Upper lobe of right lung (tissue), 1 donor: ENCODE measurements at regions of chr15 and their contacts with region 1.

Region 1: DNA sequence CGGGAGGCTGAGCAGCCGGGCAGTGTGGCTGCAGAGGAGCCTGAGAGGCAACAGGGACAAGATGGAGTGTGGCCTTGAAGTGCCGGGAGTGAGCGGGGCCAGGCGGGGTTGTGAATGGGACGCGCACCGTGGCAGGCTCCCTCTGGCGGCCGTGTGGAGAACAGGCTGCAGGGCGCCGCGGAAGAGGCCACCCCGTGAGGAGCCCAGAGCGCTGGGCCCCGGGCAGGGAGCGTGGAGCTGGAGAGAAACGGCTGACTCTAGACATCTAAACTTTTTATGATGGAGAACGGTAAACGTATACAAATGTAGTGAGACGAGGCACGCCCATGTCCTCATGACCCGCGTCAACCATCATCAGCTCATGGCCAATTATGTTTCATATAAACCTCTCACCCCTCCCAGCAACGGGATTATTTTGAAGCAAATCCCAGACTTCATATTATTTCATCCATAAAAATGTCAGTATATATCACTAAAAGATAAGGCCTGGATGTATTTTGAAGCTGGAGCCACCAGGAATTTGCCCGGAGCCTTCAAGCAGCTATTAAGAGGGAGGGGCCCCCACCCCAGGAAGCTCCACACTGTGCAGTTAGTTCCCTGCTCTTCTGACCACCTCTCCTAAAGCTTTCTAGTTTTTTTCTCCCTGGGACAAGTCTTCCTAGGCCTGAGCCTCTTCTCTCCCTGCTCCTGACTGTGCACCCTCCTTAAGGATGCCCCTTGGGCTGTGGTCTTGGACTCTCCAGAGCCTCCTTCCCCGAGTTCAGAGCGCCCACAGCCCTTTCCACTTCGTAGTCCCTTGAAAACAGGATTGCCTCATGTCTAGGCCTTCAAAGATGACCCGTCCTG is 149.4 kb downstream of the SMAD6 start:
- DNase-seq: peak; percentile 93
- ATAC-seq: peak; percentile 97
- H3K4me3 ChIP-seq: no peak overlapping the region
- H3K27ac ChIP-seq: no peak overlapping the region
- H3K4me1 ChIP-seq: peaks cover 14% of the 10 kb centered on the region
- H3K27me3 ChIP-seq: no peaks in the 10 kb centered on the region
- CTCF ChIP-seq: peak; percentile 95

Region 2: DNA sequence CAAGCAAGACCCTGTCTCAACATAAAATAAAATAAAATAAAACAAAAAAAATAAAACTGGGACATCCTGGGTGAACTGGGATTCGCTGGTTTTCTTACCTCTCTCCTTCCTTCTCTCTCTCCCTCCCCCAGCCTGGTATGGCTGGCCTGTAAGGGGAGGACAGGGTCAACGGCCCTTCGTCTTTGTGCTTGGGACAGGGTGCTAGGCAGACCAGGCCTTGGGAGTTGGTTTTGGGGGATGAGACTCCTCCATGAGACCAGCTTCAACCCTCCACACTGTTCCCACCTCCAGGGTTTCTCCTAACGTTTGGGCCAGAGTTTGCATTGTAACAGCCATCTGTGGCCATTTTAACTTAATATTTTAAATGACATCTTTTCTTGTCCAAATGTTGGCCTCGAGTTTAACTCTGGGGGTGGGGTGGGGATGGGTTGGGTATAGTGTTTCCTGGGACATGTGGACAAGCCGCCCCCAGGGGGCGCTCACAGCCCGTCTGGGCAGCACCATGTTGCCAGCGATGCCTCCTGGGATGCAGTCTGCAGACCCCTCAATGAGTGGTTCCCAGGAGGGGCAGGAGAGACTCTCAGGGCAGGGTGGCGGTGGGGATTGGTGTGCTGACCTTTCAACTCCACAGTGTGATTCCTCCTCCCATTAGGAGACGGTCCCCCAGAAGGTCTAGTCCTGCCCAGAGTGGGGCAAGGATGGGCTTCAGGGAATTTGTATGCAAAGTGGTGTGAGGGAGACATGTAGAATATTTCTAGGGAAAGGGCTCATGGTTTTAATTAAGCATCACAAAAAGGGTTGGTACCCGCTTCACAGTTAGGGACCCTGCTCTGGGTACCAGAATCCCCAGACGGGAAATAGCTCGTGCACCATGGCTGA is 247.9 kb before region 1 on chr15:
- intact Hi-C with region 1: loop called (anchors 5 kb)
- DNase-seq: peak; percentile 87
- ATAC-seq: peak; percentile 93
- H3K4me3 ChIP-seq: no peak overlapping the region
- H3K27ac ChIP-seq: no peak overlapping the region
- H3K4me1 ChIP-seq: no peaks in the 10 kb centered on the region
- H3K27me3 ChIP-seq: no peaks in the 10 kb centered on the region
- CTCF ChIP-seq: peak; percentile 84

Region 3: GRCh38 chr15:66774001-66774814 is 77.2 kb before region 1 on chr15:
- intact Hi-C with region 1: loop called (anchors 5 kb)
- DNase-seq: peak; percentile 93
- ATAC-seq: peak; percentile 95
- H3K4me3 ChIP-seq: no peak overlapping the region
- H3K27ac ChIP-seq: peak overlapping the region; percentile 51
- H3K4me1 ChIP-seq: peaks cover 52% of the 10 kb centered on the region
- H3K27me3 ChIP-seq: no peaks in the 10 kb centered on the region
- CTCF ChIP-seq: peak; percentile 96

Region 4: DNA sequence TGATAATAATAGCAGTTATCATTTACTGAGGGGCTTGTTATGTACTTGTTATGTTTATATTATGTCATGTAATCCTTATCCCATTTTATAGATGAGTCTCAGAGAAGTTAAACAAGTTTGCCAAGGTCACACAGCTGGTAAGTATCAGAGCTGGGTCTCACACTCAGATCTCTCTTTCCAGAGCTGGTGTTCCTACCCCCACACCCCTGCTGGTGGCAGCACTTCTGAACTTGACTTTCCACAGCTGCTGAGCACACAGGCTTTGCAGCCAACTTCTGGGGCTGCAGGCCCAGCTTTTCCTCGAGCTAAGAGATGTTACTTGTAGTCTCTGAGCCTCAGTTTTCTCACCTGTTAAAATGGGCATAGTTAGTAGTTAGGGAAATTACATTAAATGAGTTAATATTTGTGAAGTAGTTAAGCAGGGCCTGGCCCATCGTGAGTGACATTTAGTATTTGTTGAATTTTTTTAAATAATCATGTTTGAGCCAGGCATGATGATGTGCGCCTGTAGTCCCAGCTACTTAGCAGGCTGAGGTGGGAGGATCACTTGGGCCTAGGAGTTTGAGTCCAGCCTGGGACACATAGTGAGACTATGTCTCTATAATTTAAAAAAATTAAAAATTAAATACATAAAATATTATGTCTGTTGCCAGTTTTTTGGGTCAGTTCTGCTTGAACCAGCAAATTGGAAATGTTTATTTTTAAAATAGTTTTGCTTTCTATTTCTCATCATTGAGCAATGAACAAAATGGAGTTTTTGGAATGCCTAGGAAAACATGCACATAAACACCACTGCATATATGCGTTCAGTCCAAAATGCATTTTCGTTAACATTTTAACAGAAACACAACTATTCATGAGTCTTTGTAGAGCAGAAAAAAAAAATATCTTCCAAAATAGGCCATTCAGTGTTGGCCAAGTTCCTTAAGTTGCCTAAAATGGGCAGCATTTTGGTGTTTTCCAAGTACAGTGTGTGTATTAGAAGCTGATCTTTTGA is 62.1 kb before region 1 on chr15:
- intact Hi-C with region 1: loop called (anchors 5 kb)
- DNase-seq: peak; percentile 70
- ATAC-seq: peak; percentile 85
- H3K4me3 ChIP-seq: no peak overlapping the region
- H3K27ac ChIP-seq: no peak overlapping the region
- H3K4me1 ChIP-seq: no peaks in the 10 kb centered on the region
- H3K27me3 ChIP-seq: no peaks in the 10 kb centered on the region
- CTCF ChIP-seq: peak; percentile 59

Region 5: GRCh38 chr15:67196672-67197363 is 345.4 kb after region 1 on chr15:
- intact Hi-C with region 1: no loop called
- DNase-seq: no peak
- ATAC-seq: peak; percentile 17
- H3K4me3 ChIP-seq: no peak overlapping the region
- H3K27ac ChIP-seq: no peak overlapping the region
- H3K4me1 ChIP-seq: peaks cover 8% of the 10 kb centered on the region
- H3K27me3 ChIP-seq: no peaks in the 10 kb centered on the region
- CTCF ChIP-seq: no peak